ENCODE measurements at regions of chr2 and their contacts with region 1.

Region 1: GRCh38 chr2:8821276-8822217 is 15.9 kb downstream of the KIDINS220 start:
- DNase-seq: peak; percentile 90
- H3K4me3 Mint-ChIP-seq: no peak overlapping the region
- H3K27ac Mint-ChIP-seq: peak overlapping the region; percentile 70
- H3K4me1 Mint-ChIP-seq: peaks cover 19% of the 10 kb centered on the region
- H3K27me3 Mint-ChIP-seq: no peaks in the 10 kb centered on the region
- CTCF ChIP-seq: no peak

Region 2: GRCh38 chr2:8836971-8837794 is 15.6 kb after region 1 on chr2 and contains the start of gene KIDINS220:
- CTCF ChIA-PET with region 1: interaction called, 6 read pairs
- POLR2A ChIA-PET with region 1: interaction called, 36 read pairs
- intact Hi-C with region 1: no loop called
- DNase-seq: peak; percentile 86
- H3K4me3 Mint-ChIP-seq: peak within 1 kb of the TSS; percentile 91
- H3K27ac Mint-ChIP-seq: peak within 1 kb of the TSS; percentile 97
- H3K4me1 Mint-ChIP-seq: peaks cover 23% of the 10 kb centered on the region
- H3K27me3 Mint-ChIP-seq: no peaks in the 10 kb centered on the region
- CTCF ChIP-seq: no peak
- total RNA-seq, gene KIDINS220: 41.8 and 42.3 TPM in 2 replicates